Caco-2 (cell line): ENCODE measurements at regions of chr21 and their contacts with region 1.

Region 1: DNA sequence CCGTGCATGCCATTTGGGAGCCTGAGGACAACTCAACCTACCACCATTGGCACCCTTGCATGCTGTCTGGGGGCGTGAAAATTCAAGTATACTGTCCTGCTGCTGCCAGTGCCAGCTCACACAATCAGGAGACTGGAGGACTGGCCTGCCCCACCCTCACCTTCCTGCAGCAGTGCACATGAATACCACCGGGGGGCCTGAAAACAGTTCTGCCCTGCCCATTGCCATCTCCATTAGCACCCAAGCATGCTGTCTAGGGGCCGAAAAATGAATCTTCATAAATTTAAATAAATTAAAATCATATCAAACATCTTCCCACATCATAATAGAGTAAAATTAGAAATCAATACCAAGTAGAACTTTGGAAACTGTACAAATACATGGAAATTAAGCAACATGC is 322.1 kb upstream of the TMPRSS15 start:
- DNase-seq: peak; percentile 61 to 62
- H3K4me3 ChIP-seq: no peak overlapping the region
- H3K4me3 Mint-ChIP-seq: no peak overlapping the region
- H3K27ac Mint-ChIP-seq: no peak overlapping the region
- H3K4me1 ChIP-seq: peaks cover 18% of the 10 kb centered on the region
- H3K4me1 Mint-ChIP-seq: peaks cover 6% of the 10 kb centered on the region
- H3K27me3 ChIP-seq: no peaks in the 10 kb centered on the region
- H3K27me3 Mint-ChIP-seq: no peaks in the 10 kb centered on the region
- CTCF ChIP-seq: peak; percentile 31 to 42

Region 2: GRCh38 chr21:18522181-18522972 is 203.3 kb before region 1 on chr21:
- CTCF ChIA-PET with region 1: no interaction called
- POLR2A ChIA-PET with region 1: no interaction called
- intact Hi-C with region 1: loop called (anchors 10 kb)
- DNase-seq: no peak
- H3K4me3 ChIP-seq: no peak overlapping the region
- H3K4me3 Mint-ChIP-seq: no peak overlapping the region
- H3K27ac Mint-ChIP-seq: no peak overlapping the region
- H3K4me1 ChIP-seq: no peaks in the 10 kb centered on the region
- H3K4me1 Mint-ChIP-seq: no peaks in the 10 kb centered on the region
- H3K27me3 ChIP-seq: no peaks in the 10 kb centered on the region
- H3K27me3 Mint-ChIP-seq: peaks cover 3% of the 10 kb centered on the region
- CTCF ChIP-seq: peak; percentile 8 to 17

Region 3: DNA sequence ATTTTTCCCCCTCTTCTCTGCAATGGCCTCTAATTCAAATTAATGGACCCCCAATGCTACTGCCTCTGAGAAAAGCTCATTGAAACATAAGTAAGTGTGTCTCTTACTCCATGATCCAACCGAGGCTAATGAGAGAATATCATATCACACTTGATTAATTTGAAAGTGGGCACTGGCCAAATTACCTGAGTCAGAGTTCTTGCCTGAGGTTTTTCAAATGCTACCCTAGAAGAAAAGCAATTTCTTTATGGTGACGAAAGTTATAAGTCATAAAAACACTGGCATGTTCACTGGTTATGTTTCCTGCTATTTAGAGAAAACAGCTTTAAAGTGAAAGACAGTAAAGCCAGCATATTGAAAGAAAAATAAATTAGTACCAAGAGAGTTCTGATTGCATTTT is 46.8 kb after region 1 on chr21:
- CTCF ChIA-PET with region 1: no interaction called
- POLR2A ChIA-PET with region 1: no interaction called
- intact Hi-C with region 1: loop called (anchors 2 kb)
- DNase-seq: no peak
- H3K4me3 ChIP-seq: no peak overlapping the region
- H3K4me3 Mint-ChIP-seq: no peak overlapping the region
- H3K27ac Mint-ChIP-seq: no peak overlapping the region
- H3K4me1 ChIP-seq: peaks cover 8% of the 10 kb centered on the region; the same call in 1 of the 2 replicates
- H3K4me1 Mint-ChIP-seq: peaks cover 8% of the 10 kb centered on the region
- H3K27me3 ChIP-seq: no peaks in the 10 kb centered on the region
- H3K27me3 Mint-ChIP-seq: no peaks in the 10 kb centered on the region
- CTCF ChIP-seq: no peak